ENCODE measurements at regions of chr1 and their contacts with region 1.

Region 1: DNA sequence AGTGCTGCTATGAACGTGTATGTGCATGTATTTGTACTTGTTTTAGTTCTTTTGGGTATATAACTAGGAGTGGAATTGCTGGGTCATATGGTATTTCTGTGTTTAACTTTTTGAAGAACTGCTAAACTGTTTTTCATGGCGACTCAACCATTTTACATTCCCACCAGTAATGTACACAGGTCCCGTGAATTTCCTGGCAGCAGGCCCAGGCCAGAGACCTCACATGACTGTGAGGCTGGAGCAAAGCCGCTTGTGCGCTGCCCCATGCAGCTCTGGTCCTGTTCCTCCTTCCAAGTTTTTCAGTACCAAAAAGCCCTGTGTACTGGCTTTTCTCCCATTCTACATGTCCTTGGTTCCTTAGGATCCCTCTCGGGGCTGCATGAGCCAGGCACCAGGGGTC is 29.6 kb downstream of the ACOT11 start:
- DNase-seq: peak in 1 of 4 experiments; percentile 70
- ATAC-seq: 0 out of 3 replicates have a peak, but pooled peaks have one; percentile 24
- H3K4me3 ChIP-seq: no peak overlapping the region
- H3K27ac ChIP-seq: no peak overlapping the region
- H3K4me1 ChIP-seq: peaks cover 8 to 12% of the 10 kb centered on the region in 2 experiments; a peak in 4 of 5 replicates
- H3K27me3 ChIP-seq: peaks cover 2 to 38% of the 10 kb centered on the region in 2 experiments; a peak in 3 of 5 replicates
- CTCF ChIP-seq: no peak
- EP300 ChIP-seq: peak; percentile 16; the same call in 1 of the 2 replicates
- POLR2A ChIP-seq: no peak
- RAD21 ChIP-seq: no peak; a peak in 1 of 4 replicates

Region 2: GRCh38 chr1:54564312-54565112 is 13.1 kb before region 1 on chr1:
- CTCF ChIA-PET with region 1: no interaction called
- POLR2A ChIA-PET with region 1: interaction called, 10 read pairs
- in situ Hi-C with region 1: no loop called
- intact Hi-C with region 1: no loop called
- DNase-seq: no peak
- ATAC-seq: peak; percentile 45
- H3K4me3 ChIP-seq: no peak overlapping the region
- H3K27ac ChIP-seq: no peak overlapping the region
- H3K4me1 ChIP-seq: peaks cover 3 to 17% of the 10 kb centered on the region in 2 experiments; a peak in 3 of 5 replicates
- H3K27me3 ChIP-seq: peaks cover 21 to 41% of the 10 kb centered on the region in 2 experiments; a peak in 4 of 5 replicates
- CTCF ChIP-seq: no peak
- EP300 ChIP-seq: no peak
- POLR2A ChIP-seq: no peak
- RAD21 ChIP-seq: no peak

Region 3: GRCh38 chr1:54591127-54591756 is 13.6 kb after region 1 on chr1:
- CTCF ChIA-PET with region 1: no interaction called
- POLR2A ChIA-PET with region 1: interaction called, 14 read pairs
- in situ Hi-C with region 1: no loop called
- intact Hi-C with region 1: no loop called
- DNase-seq: no peak
- ATAC-seq: no peak
- H3K4me3 ChIP-seq: no peak overlapping the region
- H3K27ac ChIP-seq: no peak overlapping the region
- H3K4me1 ChIP-seq: peaks cover 0 to 5% of the 10 kb centered on the region in 2 experiments; a peak in 1 of 5 replicates
- H3K27me3 ChIP-seq: peaks cover 4 to 21% of the 10 kb centered on the region in 2 experiments; a peak in 4 of 5 replicates
- CTCF ChIP-seq: no peak
- EP300 ChIP-seq: no peak
- POLR2A ChIP-seq: no peak
- RAD21 ChIP-seq: no peak

Measured in K562 (cell line).